CD4-positive, alpha-beta T cell (primary cell): ENCODE measurements at regions of chr17 and their contacts with region 1.

Region 1: DNA sequence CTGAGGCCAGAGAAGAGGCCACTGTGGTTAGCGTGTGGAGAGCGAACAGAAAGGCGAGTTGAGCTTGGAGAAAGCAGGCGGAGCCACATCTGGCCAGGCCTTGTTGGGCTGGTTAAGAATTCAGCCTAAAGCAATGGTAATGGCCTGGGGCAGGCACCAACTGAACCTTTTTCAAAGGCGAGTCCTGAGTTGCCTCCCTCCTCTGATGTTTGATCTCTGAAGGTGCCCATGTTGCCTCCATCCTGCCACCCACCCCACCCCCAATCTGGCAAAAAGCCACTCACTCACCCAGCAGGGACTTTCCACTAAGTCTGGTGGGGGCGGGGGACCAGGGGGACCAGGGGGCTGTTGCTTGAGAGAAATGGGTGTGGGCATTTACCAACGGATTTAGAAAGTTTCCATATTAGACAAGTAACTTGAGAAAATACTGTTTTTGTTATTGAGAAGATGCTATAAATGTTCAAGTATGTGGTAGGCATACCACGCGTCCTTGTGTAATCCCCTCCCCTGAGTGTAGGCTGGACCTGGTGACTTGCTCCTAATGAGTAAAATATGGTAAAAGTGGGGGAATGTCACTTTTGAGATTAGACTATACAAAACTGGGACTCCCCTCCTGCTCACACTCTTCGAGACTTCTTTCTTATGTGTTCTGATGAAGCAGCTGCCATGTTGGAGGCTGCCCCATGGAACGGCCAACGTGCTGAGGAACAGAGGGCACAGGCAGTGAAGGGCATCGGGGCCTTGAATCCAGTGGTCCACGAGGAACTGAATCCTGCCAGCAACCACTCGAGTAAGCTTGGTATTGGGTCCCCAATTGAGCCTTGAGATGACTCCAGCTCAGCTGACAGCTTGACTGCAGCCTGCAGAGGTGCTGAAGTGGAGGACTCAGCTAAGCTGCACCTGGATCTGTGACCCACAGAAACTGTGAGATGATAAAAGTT is 29.9 kb upstream of the TNS4 start:
- DNase-seq: peak in 13 of 14 experiments; percentile 51 to 84 (median 72)
- ATAC-seq: no peak
- H3K4me3 ChIP-seq: no peak overlapping the region
- H3K4me3 Mint-ChIP-seq: peak overlapping the region; percentile 8
- H3K27ac ChIP-seq: no peak overlapping the region
- H3K27ac Mint-ChIP-seq: peak overlapping the region; percentile 98
- H3K4me1 ChIP-seq: peaks cover 71% of the 10 kb centered on the region
- H3K4me1 Mint-ChIP-seq: peaks cover 72% of the 10 kb centered on the region
- H3K27me3 ChIP-seq: no peaks in the 10 kb centered on the region
- H3K27me3 Mint-ChIP-seq: peaks cover 5% of the 10 kb centered on the region
- CTCF ChIP-seq: no peak

Region 2: GRCh38 chr17:40317880-40318829 is 213.2 kb before region 1 on chr17:
- CTCF ChIA-PET with region 1: interaction called, 6 read pairs
- POLR2A ChIA-PET with region 1: interaction called, 11 read pairs
- intact Hi-C with region 1: loop called in 1 of 2 experiments (anchors 5 kb)
- DNase-seq: peak; percentile 81 to 95 (median 90)
- ATAC-seq: peak; percentile 61
- H3K4me3 ChIP-seq: peak overlapping the region; percentile 96
- H3K4me3 Mint-ChIP-seq: peak overlapping the region; percentile 95
- H3K27ac ChIP-seq: peak overlapping the region; percentile 99
- H3K27ac Mint-ChIP-seq: peak overlapping the region; percentile 99
- H3K4me1 ChIP-seq: peaks cover 85% of the 10 kb centered on the region
- H3K4me1 Mint-ChIP-seq: peaks cover 84% of the 10 kb centered on the region
- H3K27me3 ChIP-seq: no peaks in the 10 kb centered on the region
- H3K27me3 Mint-ChIP-seq: no peaks in the 10 kb centered on the region
- CTCF ChIP-seq: no peak

Region 3: DNA sequence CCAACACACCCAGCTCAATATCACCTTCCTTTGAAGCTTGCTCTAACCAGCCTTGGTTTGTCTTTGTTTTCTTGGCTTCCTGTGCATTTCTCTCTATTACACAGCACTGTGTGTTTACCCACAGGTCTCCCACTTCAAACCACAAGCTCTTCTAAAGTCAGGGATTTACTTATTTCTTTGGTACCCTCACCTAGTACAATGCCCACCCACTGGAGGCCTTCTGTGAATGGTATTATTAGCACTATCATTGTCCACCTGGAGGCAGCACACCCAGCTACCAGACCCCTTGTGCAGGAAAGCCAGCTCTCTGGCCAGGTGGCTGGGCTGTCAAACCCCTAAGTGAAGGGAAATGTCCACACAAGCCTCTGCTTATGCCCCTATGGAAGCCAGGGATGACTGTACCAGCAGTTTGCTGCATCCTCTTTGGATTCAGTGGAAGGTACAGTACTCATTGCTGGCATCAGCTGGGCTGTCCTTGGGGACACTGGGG is 104.3 kb before region 1 on chr17:
- CTCF ChIA-PET with region 1: interaction called, 5 read pairs
- POLR2A ChIA-PET with region 1: interaction called, 14 read pairs
- intact Hi-C with region 1: no loop called
- DNase-seq: peak in 5 of 14 experiments; percentile 23 to 47 (median 46)
- ATAC-seq: peak; percentile 95
- H3K4me3 ChIP-seq: no peak overlapping the region
- H3K4me3 Mint-ChIP-seq: peak overlapping the region; percentile 66
- H3K27ac ChIP-seq: peak overlapping the region in 1 of 2 donors; percentile 7
- H3K27ac Mint-ChIP-seq: peak overlapping the region; percentile 51
- H3K4me1 ChIP-seq: peaks cover 33% of the 10 kb centered on the region
- H3K4me1 Mint-ChIP-seq: peaks cover 29% of the 10 kb centered on the region
- H3K27me3 ChIP-seq: no peaks in the 10 kb centered on the region
- H3K27me3 Mint-ChIP-seq: no peaks in the 10 kb centered on the region
- CTCF ChIP-seq: no peak

Region 4: DNA sequence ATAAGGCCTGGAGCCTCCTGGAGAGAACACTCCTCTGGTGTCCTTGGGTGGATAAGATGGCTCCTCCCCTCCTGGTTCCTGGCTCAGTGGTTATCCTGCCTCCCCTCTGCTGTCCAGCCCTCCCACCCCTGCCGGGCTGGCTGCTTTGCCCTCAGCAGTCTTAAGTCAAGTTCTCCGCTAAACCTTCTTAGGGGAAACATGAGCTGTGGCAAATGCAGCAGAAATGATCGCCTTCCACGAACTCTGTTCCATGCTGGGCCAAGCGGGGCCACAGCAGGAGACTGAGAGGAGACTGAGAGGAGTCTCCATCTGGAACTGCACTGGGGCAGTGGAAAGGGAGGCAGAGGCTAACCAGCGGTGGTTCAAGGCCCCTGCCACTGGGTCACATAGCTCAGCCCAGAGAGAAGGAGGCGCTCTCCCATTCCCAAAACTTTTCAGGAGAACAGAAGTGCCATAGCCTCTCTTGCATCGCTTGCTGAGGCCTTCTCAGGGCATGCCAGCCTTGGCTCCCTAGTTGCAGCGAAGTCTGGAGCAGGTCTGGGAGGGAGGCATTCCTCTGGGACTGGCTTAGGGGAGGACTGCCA is 56.8 kb before region 1 on chr17:
- CTCF ChIA-PET with region 1: interaction called, 33 read pairs
- POLR2A ChIA-PET with region 1: interaction called, 74 read pairs
- intact Hi-C with region 1: loop called in 1 of 2 experiments (anchors 1 kb)
- DNase-seq: no peak
- ATAC-seq: no peak
- H3K4me3 ChIP-seq: no peak overlapping the region
- H3K4me3 Mint-ChIP-seq: no peak overlapping the region
- H3K27ac ChIP-seq: no peak overlapping the region
- H3K27ac Mint-ChIP-seq: no peak overlapping the region
- H3K4me1 ChIP-seq: peaks cover 40% of the 10 kb centered on the region
- H3K4me1 Mint-ChIP-seq: peaks cover 22% of the 10 kb centered on the region
- H3K27me3 ChIP-seq: no peaks in the 10 kb centered on the region
- H3K27me3 Mint-ChIP-seq: no peaks in the 10 kb centered on the region
- CTCF ChIP-seq: no peak

Region 5: GRCh38 chr17:40542558-40543411 is 11.5 kb after region 1 on chr17:
- CTCF ChIA-PET with region 1: interaction called, 22 read pairs
- POLR2A ChIA-PET with region 1: interaction called, 668 read pairs
- intact Hi-C with region 1: no loop called
- DNase-seq: peak in 5 of 14 experiments; percentile 32 to 80 (median 45)
- ATAC-seq: no peak
- H3K4me3 ChIP-seq: no peak overlapping the region
- H3K4me3 Mint-ChIP-seq: peak overlapping the region; percentile 72
- H3K27ac ChIP-seq: peak overlapping the region in 1 of 2 donors; percentile 79
- H3K27ac Mint-ChIP-seq: peak overlapping the region; percentile 94
- H3K4me1 ChIP-seq: peaks cover 94% of the 10 kb centered on the region
- H3K4me1 Mint-ChIP-seq: peaks cover 83% of the 10 kb centered on the region
- H3K27me3 ChIP-seq: no peaks in the 10 kb centered on the region
- H3K27me3 Mint-ChIP-seq: no peaks in the 10 kb centered on the region
- CTCF ChIP-seq: no peak

Region 6: DNA sequence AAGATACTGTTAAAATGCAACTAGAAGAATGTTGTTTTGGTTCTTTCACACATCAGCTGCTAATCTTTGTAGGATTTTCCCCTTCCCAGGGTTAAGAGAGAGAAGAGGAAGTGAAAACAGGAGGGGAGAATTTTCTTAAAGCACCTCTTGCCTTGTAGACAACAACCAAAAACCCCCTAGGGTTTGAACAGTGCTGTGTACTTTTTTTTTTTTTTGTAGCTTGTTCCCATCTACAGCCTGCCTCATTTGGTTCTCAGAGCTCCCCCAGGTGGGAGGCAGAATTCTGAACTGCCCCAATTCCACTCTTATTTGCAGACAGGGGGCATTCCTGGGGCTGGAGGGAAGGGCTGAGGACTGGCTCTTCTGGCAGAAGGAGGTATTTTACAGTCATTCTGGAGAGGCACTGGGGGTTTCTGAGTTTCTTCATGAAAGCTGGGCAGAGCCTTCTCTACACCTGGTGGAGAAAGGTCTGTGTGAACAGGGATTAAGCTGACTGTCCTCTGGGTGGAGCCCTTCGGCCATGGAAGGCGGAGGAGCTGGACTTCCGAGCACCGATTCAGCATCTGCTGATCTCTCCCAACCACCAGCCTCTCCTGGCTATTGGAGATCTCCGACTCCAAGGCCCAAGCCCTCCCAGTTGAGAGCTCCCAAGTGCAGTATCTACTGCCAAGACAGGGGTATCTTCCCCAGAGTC is 84.1 kb after region 1 on chr17:
- CTCF ChIA-PET with region 1: interaction called, 16 read pairs
- POLR2A ChIA-PET with region 1: interaction called, 8 read pairs
- intact Hi-C with region 1: no loop called
- DNase-seq: peak in 9 of 14 experiments; percentile 44 to 89 (median 55)
- ATAC-seq: peak; percentile 35
- H3K4me3 ChIP-seq: no peak overlapping the region
- H3K4me3 Mint-ChIP-seq: peak overlapping the region; percentile 75
- H3K27ac ChIP-seq: peak overlapping the region; percentile 96 to 99
- H3K27ac Mint-ChIP-seq: peak overlapping the region; percentile 98
- H3K4me1 ChIP-seq: peaks cover 83% of the 10 kb centered on the region
- H3K4me1 Mint-ChIP-seq: peaks cover 72% of the 10 kb centered on the region
- H3K27me3 ChIP-seq: no peaks in the 10 kb centered on the region
- H3K27me3 Mint-ChIP-seq: no peaks in the 10 kb centered on the region
- CTCF ChIP-seq: peak; percentile 67